ENCODE measurements at regions of chr11 and their contacts with region 1.

Region 1: GRCh38 chr11:128544471-128545051 is 42.8 kb downstream of the ETS1 start:
- DNase-seq: peak; percentile 32
- ATAC-seq: peak; percentile 55
- H3K4me3 Mint-ChIP-seq: peak overlapping the region; percentile 69
- H3K27ac Mint-ChIP-seq: peak overlapping the region; percentile 78
- H3K4me1 Mint-ChIP-seq: peaks cover 56% of the 10 kb centered on the region
- H3K27me3 Mint-ChIP-seq: no peaks in the 10 kb centered on the region
- CTCF ChIP-seq: no peak

Region 2: GRCh38 chr11:128530118-128531074 is 14.2 kb before region 1 on chr11:
- CTCF ChIA-PET with region 1: interaction called, 19 read pairs
- POLR2A ChIA-PET with region 1: interaction called, 18 read pairs
- intact Hi-C with region 1: no loop called
- DNase-seq: peak; percentile 33
- ATAC-seq: no peak
- H3K4me3 Mint-ChIP-seq: no peak overlapping the region
- H3K27ac Mint-ChIP-seq: peak overlapping the region; percentile 26
- H3K4me1 Mint-ChIP-seq: peaks cover 59% of the 10 kb centered on the region
- H3K27me3 Mint-ChIP-seq: no peaks in the 10 kb centered on the region
- CTCF ChIP-seq: no peak